GM12878 (cell line): ENCODE measurements at regions of chr3 and their contacts with region 1.

Region 1: DNA sequence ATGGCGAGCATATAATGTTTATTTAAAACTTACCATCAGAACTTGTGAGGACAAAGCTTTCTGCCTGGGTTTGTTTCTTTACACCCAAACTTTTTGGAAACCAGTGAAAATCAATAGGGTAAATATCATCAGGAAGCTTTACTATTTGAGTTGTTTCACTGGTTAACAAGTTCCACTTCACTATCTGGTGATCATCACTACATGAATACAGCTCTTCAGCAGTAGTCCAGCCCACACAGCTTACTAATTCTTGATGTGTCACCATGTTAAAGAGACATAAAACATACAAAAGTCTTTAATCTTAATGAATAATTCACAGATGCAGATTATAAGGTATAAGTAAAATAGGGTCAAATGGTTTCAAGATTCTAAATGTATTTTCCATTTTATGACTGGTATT is 17.6 kb downstream of the IFT80 start:
- DNase-seq: no peak
- ATAC-seq: no peak
- H3K4me3 ChIP-seq: no peak overlapping the region
- H3K27ac ChIP-seq: no peak overlapping the region
- H3K4me1 ChIP-seq: no peaks in the 10 kb centered on the region
- H3K27me3 ChIP-seq: no peaks in the 10 kb centered on the region
- CTCF ChIP-seq: no peak
- EP300 ChIP-seq: no peak
- POLR2A ChIP-seq: no peak
- RAD21 ChIP-seq: no peak

Region 2: GRCh38 chr3:160368804-160369203 is 12.7 kb before region 1 on chr3:
- CTCF ChIA-PET with region 1: interaction called, 10 read pairs
- POLR2A ChIA-PET with region 1: interaction called, 3 read pairs
- RAD21 ChIA-PET with region 1: no interaction called
- SMC1A ChIA-PET with region 1: interaction called, 11 read pairs
- in situ Hi-C with region 1: no loop called
- intact Hi-C with region 1: no loop called
- DNase-seq: no peak
- ATAC-seq: peak; percentile 89
- H3K4me3 ChIP-seq: no peak overlapping the region
- H3K27ac ChIP-seq: no peak overlapping the region
- H3K4me1 ChIP-seq: no peaks in the 10 kb centered on the region
- H3K27me3 ChIP-seq: no peaks in the 10 kb centered on the region
- CTCF ChIP-seq: no peak
- EP300 ChIP-seq: no peak
- POLR2A ChIP-seq: no peak
- RAD21 ChIP-seq: no peak